CD14-positive monocyte (primary cell): ENCODE measurements at regions of chr15 and their contacts with region 1.

Region 1: GRCh38 chr15:65638681-65639089 is 16.9 kb downstream of the SLC24A1 start:
- DNase-seq: peak; percentile 48 to 63 (median 50)
- H3K4me3 ChIP-seq: no peak overlapping the region
- H3K4me3 Mint-ChIP-seq: peak overlapping the region in 1 of 2 donors; percentile 76
- H3K27ac ChIP-seq: no peak overlapping the region
- H3K27ac Mint-ChIP-seq: peak overlapping the region in 1 of 7 donors; percentile 9
- H3K4me1 ChIP-seq: peaks cover 0 to 6% of the 10 kb centered on the region in 2 donors
- H3K4me1 Mint-ChIP-seq: peaks cover 11% of the 10 kb centered on the region
- H3K27me3 ChIP-seq: no peaks in the 10 kb centered on the region
- H3K27me3 Mint-ChIP-seq: peaks cover 0 to under 1% (median 0%) of the 10 kb centered on the region in 3 donors
- CTCF ChIP-seq: peak; percentile 87

Region 2: DNA sequence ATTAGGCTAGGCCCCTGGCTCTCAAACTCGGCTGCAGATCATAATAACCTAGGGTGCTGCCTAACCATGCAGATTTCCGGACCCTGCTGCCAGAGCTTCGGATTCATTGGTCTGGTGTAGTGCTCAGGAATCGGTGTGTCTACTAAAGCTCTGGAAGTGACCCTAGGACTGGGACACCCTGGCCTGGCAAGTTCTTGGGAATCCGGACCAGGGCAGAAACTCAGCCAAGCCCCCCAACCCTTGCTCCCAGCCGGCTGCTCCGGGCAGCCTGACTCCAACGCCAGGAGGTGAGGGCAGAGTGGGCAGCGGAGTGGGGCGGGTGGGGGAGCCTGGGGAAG is 283.9 kb before region 1 on chr15:
- intact Hi-C with region 1: no loop called
- DNase-seq: no peak
- H3K4me3 ChIP-seq: no peak overlapping the region
- H3K4me3 Mint-ChIP-seq: peak overlapping the region in 1 of 2 donors; percentile 58
- H3K27ac ChIP-seq: no peak overlapping the region
- H3K27ac Mint-ChIP-seq: no peak overlapping the region
- H3K4me1 ChIP-seq: peaks cover 0 to 3% of the 10 kb centered on the region in 2 donors
- H3K4me1 Mint-ChIP-seq: peaks cover 5% of the 10 kb centered on the region
- H3K27me3 ChIP-seq: peaks cover 34 to 70% of the 10 kb centered on the region in 2 donors
- H3K27me3 Mint-ChIP-seq: peaks cover 49 to 67% (median 59%) of the 10 kb centered on the region in 3 donors
- CTCF ChIP-seq: no peak

Region 3: DNA sequence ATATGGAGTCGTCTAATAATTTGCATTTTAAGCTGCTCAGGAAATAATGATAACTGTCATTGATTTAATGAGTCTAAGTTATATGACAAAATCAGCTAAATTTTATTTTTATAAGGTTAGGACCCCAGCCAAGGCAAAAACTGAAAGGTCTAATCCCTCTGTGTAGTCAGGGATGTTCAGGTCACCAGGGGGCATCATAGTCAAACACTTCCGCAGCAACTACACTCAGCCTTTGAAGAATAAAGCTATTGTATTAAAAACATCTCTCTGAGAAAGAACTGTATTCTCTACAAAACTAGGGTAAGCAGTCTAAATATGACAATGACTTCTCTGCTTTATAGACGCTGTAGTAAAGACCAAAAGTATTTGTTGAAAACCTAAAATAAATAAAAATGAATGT is 42.7 kb before region 1 on chr15:
- intact Hi-C with region 1: no loop called
- DNase-seq: no peak
- H3K4me3 ChIP-seq: no peak overlapping the region
- H3K4me3 Mint-ChIP-seq: no peak overlapping the region
- H3K27ac ChIP-seq: no peak overlapping the region
- H3K27ac Mint-ChIP-seq: no peak overlapping the region
- H3K4me1 ChIP-seq: no peaks in the 10 kb centered on the region
- H3K4me1 Mint-ChIP-seq: no peaks in the 10 kb centered on the region
- H3K27me3 ChIP-seq: no peaks in the 10 kb centered on the region
- H3K27me3 Mint-ChIP-seq: no peaks in the 10 kb centered on the region
- CTCF ChIP-seq: no peak

Region 4: DNA sequence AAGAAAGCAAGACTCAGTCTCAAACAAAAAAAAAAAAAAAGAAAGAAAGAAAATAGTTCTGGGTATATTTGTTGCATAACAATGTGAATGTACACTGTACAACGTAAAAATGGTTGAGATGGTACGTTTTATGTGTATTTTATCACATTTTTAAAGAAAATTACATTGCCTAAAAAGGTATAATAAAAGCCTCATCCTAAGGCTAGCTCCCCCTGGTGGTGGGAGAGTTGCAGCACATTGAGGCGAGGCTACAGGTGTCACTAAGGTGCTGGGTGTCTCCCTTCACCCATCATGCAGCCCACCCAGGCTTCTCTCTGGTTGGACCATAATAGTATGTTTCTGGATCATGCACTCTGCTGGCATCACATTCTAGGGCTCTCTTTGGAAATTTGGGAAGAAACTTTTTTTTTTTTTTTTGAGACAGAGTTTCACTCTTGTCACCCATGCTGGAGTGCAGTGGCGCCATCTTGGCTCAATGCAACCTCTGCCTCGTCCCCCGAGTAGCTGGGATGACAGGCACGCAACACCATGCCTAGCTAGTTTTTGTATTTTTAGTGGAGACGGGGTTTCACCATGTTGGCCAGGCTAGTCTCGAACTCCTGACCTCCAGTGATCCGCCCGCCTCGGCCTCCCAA is 218.3 kb after region 1 on chr15:
- intact Hi-C with region 1: loop called in 1 of 2 experiments (anchors 5 kb)
- DNase-seq: peak; percentile 56 to 76 (median 74)
- H3K4me3 ChIP-seq: no peak overlapping the region
- H3K4me3 Mint-ChIP-seq: peak overlapping the region in 1 of 2 donors; percentile 27
- H3K27ac ChIP-seq: no peak overlapping the region
- H3K27ac Mint-ChIP-seq: peak overlapping the region in 1 of 7 donors; percentile 68
- H3K4me1 ChIP-seq: no peaks in the 10 kb centered on the region
- H3K4me1 Mint-ChIP-seq: peaks cover 19% of the 10 kb centered on the region
- H3K27me3 ChIP-seq: no peaks in the 10 kb centered on the region
- H3K27me3 Mint-ChIP-seq: peaks cover 0 to 1% (median 0%) of the 10 kb centered on the region in 3 donors
- CTCF ChIP-seq: peak; percentile 97

Region 5: GRCh38 chr15:66196602-66197001 is 557.9 kb after region 1 on chr15:
- intact Hi-C with region 1: loop called in 1 of 2 experiments (anchors 10 kb)
- DNase-seq: no peak
- H3K4me3 ChIP-seq: no peak overlapping the region
- H3K4me3 Mint-ChIP-seq: no peak overlapping the region
- H3K27ac ChIP-seq: no peak overlapping the region
- H3K27ac Mint-ChIP-seq: no peak overlapping the region
- H3K4me1 ChIP-seq: no peaks in the 10 kb centered on the region
- H3K4me1 Mint-ChIP-seq: no peaks in the 10 kb centered on the region
- H3K27me3 ChIP-seq: no peaks in the 10 kb centered on the region
- H3K27me3 Mint-ChIP-seq: peaks cover 6 to 8% (median 7%) of the 10 kb centered on the region in 3 donors
- CTCF ChIP-seq: no peak